ENCODE measurements at regions of chr14 and their contacts with region 1.

Region 1: GRCh38 chr14:68685419-68686204 is 107.3 kb downstream of the ZFP36L1 start:
- DNase-seq: peak; percentile 68 to 97
- H3K4me3 ChIP-seq: no peak overlapping the region
- H3K27ac ChIP-seq: peak overlapping the region; percentile 90
- H3K4me1 ChIP-seq: peaks cover 87% of the 10 kb centered on the region
- H3K27me3 ChIP-seq: no peaks in the 10 kb centered on the region
- CTCF ChIP-seq: no peak

Region 2: DNA sequence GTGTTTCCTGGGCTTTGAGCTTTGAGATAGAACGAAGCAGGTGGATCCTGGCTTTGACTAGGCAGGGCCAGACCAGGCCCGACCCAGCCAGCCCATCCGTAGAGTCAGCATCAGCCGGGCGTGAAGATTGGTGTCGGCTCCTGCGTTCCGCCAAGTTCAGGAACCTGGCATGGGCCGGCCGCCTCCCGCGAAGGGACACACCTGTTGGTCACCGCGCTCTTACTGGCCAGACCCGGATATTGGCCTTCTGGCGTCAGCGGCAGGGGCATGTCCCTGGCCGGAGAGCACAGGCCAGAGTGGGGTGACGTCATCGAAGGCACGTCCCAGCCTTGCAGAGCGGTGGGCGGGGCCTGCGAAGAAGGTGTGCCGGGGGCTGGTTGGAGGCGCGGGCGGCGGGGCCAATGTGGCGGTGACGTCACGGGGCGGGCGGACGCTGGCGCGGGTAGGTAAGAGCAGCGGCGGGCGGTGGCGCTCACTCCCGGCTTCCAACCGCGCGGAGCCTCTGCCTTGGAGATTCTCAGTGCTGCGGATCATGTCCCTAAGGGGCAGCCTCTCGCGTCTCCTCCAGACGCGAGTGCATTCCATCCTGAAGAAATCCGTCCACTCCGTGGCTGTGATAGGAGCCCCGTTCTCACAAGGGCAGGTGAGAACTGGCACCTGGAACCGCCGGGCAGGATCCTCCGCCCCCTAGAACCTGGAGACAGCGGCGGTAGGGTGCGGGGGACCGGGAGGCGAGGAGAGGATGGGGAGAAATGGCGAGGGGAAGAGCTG is 1066.0 kb before region 1 on chr14 and contains the start of gene ARG2:
- CTCF ChIA-PET with region 1: no interaction called
- POLR2A ChIA-PET with region 1: interaction called, 17 read pairs
- intact Hi-C with region 1: no loop called
- DNase-seq: peak; percentile 98 to 99
- H3K4me3 ChIP-seq: peak within 1 kb of the TSS; percentile 73
- H3K27ac ChIP-seq: peak within 1 kb of the TSS; percentile 36
- H3K4me1 ChIP-seq: peaks cover 27% of the 10 kb centered on the region
- H3K27me3 ChIP-seq: no peaks in the 10 kb centered on the region
- CTCF ChIP-seq: no peak
- total RNA-seq, gene ARG2: 8.6 and 10.2 TPM in 2 replicates

Region 3: DNA sequence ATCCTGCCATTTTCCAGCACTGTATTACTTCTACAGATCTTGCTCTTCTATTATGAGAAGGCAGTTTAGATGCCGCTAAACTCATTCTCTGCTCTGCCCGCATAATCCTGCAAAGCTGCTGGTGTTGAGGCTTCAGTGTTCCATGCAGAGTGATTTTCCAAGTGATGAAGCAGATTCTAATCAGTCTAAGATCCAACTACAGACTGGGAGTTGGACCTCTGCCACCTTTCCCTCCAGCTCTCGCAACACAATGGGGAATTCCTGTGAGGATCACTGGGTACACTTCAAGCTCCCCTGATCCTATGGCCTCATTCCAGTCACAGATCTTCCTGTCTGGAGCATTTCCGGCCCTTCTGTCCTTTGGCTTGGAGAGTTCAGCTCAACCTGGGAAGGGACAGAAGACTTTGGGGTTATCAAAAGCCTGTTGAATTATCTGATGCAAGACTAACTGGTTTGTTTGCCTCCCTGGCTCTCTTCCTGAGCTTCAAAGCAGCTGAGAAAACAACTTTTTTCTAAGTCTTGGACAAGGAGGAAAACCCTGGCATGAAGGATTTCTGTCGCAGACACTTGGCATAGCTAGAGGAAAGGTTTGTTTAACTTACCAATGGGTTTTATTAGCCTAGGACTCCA is 226.7 kb before region 1 on chr14:
- CTCF ChIA-PET with region 1: no interaction called
- POLR2A ChIA-PET with region 1: interaction called, 20 read pairs
- intact Hi-C with region 1: no loop called
- DNase-seq: peak; percentile 85 to 97
- H3K4me3 ChIP-seq: peak overlapping the region; percentile 25; the same call in 1 of the 2 replicates
- H3K27ac ChIP-seq: peak overlapping the region; percentile 93
- H3K4me1 ChIP-seq: peaks cover 77% of the 10 kb centered on the region
- H3K27me3 ChIP-seq: no peaks in the 10 kb centered on the region
- CTCF ChIP-seq: no peak

Region 4: DNA sequence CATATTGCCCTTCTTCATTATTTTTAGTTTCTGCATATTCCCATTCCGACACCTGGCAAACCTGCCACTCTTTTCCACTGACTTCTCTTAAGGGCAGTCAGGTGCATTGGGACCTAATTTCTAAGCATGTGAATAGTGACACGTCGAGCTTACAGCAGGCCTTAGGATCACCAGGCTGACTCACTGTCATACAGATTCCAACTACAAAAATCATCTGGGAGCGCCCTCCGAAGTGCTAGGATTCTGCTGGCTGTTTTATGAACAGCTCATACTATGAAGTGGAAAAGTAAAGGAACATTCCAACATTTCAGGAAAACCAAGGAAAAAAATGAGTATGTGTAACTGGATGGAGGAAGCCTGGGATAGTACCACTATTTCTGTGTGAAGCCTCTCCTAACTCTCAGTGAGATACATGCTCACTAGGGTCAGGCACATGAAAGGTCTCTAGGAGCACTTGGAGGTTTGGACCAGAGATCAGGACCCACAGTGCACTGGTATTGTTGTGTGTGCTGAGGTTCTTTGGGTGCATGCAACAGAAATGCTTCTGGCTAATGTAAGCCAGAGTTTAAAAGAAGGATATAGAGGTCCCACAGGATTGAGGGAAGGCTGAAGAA is 150.1 kb before region 1 on chr14:
- CTCF ChIA-PET with region 1: no interaction called
- POLR2A ChIA-PET with region 1: interaction called, 32 read pairs
- intact Hi-C with region 1: no loop called
- DNase-seq: peak; percentile 38 to 64
- H3K4me3 ChIP-seq: no peak overlapping the region
- H3K27ac ChIP-seq: peak overlapping the region; percentile 77
- H3K4me1 ChIP-seq: peaks cover 24% of the 10 kb centered on the region
- H3K27me3 ChIP-seq: no peaks in the 10 kb centered on the region
- CTCF ChIP-seq: no peak

Region 5: GRCh38 chr14:68607081-68607886 is 78.3 kb before region 1 on chr14:
- CTCF ChIA-PET with region 1: no interaction called
- POLR2A ChIA-PET with region 1: no interaction called
- intact Hi-C with region 1: no loop called
- DNase-seq: no peak
- H3K4me3 ChIP-seq: no peak overlapping the region
- H3K27ac ChIP-seq: no peak overlapping the region
- H3K4me1 ChIP-seq: no peaks in the 10 kb centered on the region
- H3K27me3 ChIP-seq: no peaks in the 10 kb centered on the region
- CTCF ChIP-seq: no peak

Region 6: DNA sequence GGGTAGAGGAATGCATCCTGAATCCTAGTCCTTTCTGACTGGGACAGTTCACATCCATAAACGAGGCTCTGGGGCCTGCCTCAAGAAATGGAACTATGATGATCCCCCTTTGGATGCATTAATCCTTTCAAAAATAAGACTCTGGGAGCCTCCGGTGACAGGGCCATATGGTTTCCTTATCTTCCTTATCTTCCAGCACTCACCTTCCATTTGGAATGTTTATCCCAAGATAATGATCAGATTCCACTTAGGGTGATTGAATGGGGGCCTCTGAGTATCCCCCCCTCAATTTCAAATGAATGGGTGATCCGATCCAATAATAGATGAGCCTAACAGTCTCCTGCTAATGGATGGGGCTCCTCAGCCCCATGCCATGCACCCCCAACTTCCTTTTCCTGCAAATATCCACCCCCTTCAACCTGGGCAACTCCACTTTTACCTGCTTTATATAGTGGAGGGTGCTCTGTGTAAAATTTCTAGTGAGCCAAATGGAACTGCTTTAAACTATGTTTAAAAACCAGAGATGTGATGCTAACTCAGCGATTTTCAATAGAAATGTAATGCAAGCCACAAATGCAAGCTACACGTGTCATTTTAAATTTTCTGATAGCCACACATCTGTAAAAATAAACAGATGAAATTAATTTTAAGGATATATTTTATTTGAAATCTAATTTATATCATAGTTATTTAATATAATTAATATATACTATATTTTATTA is 50.6 kb before region 1 on chr14:
- CTCF ChIA-PET with region 1: no interaction called
- POLR2A ChIA-PET with region 1: interaction called, 16 read pairs
- intact Hi-C with region 1: no loop called
- DNase-seq: peak in 1 of 2 experiments; percentile 19
- H3K4me3 ChIP-seq: no peak overlapping the region
- H3K27ac ChIP-seq: no peak overlapping the region
- H3K4me1 ChIP-seq: peaks cover 9% of the 10 kb centered on the region
- H3K27me3 ChIP-seq: no peaks in the 10 kb centered on the region
- CTCF ChIP-seq: no peak

Region 7: DNA sequence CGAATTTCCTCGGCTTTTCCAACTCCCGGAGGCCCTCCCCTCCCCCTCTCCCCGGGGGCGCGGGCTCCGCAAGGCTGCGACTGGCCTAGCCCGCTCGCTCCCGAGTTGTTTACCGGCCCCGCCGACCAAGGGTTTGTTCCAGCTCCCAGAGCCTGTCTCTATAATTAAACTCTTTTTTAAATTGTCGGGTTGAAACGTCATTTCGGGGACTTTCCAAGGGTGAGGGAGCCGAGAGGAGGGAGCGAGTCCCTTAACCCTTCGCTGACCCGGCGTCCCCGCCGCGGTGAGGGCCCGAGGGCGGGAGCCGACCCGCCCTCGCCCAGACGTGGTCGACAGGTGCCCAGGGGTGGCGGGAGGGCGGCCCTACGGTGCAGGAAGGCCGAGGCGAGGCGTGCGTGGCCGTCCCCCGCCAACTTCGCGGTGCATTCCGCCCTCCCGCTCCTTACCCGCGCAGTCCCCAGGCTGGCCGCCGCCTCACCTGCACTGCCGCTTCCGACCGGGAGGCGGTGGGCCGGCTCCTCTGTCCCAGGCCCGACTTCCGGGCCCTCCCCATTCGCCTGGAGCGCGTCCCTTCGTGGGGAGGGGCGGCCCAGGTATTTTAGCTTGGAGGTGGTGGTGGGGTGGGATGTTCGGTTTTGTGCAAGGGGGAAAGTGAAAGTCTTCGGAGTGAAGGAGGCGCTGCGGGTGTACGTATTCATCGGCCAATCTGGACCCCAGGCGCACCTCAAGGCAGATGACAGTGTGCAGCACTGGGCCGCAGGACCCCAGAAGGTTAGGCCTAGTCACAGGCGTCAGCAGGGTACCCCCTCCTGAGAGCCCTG is 110.2 kb after region 1 on chr14:
- CTCF ChIA-PET with region 1: interaction called, 4 read pairs
- POLR2A ChIA-PET with region 1: interaction called, 26 read pairs
- intact Hi-C with region 1: no loop called
- DNase-seq: peak; percentile 72 to 90
- H3K4me3 ChIP-seq: peak overlapping the region; percentile 95
- H3K27ac ChIP-seq: peak overlapping the region; percentile 98
- H3K4me1 ChIP-seq: peaks cover 24% of the 10 kb centered on the region
- H3K27me3 ChIP-seq: no peaks in the 10 kb centered on the region
- CTCF ChIP-seq: peak; percentile 82

Measured in PC-9 (cell line).